PC-9 (cell line): ENCODE measurements at regions of chr3 and their contacts with region 1.

Region 1: DNA sequence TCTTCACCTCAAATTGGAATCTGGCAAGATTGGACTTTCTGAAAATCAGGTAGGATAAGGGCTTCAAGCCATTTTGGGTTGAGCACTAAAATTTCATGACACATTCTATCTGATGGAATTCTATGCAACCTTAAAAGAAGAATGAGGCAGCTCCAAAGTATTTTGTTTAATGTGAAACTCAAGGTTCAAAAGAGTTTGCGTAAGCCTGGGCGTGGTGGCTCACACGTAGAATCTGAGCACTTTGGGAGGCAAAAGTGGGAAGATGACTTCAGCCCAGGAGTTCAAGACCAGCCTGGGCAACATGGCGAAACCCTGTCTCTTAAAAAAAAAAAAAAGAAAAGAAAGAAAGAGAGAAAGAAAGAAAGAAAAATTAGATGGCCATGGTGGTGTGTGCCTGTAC is 3.6 kb upstream of the PLA1A start:
- DNase-seq: no peak
- H3K4me3 ChIP-seq: no peak overlapping the region
- H3K27ac ChIP-seq: no peak overlapping the region
- H3K4me1 ChIP-seq: no peaks in the 10 kb centered on the region
- H3K27me3 ChIP-seq: peaks cover 32% of the 10 kb centered on the region
- CTCF ChIP-seq: no peak

Region 2: DNA sequence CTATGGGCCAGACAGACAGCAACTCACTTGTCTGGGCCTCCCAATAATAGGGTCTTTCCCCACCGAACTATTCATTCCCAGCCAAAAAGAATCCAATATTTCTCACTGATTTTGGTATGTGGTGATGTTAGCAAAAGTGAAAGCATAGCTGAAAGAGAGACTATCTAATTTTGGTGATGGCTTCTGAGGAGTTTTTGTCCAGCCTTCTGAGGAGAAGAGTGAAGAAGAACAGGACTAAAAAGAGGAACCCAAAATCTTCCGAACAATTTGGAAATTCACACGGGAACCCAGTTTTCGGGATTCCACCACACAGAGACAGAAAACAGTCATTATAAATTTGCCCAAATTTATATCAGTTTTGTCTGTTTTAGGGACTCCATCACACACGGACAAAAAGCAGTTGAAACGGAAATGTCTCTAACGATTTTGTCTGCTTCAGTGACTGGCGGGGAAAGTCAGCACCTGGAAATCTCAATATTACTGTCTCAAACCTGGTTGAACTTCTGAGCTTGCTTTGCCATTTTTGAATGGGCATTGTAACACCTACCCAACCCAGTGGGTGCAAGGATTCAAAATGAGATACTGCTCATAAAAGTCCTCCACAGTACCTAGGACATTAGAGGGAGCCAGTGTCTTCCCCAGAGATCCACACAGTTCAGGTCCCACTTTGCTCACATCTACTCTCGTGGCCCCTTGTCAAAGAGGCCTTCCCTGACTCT is 43.7 kb before region 1 on chr3:
- CTCF ChIA-PET with region 1: no interaction called
- POLR2A ChIA-PET with region 1: no interaction called
- intact Hi-C with region 1: no loop called
- DNase-seq: no peak
- H3K4me3 ChIP-seq: no peak overlapping the region
- H3K27ac ChIP-seq: no peak overlapping the region
- H3K4me1 ChIP-seq: no peaks in the 10 kb centered on the region
- H3K27me3 ChIP-seq: no peaks in the 10 kb centered on the region
- CTCF ChIP-seq: no peak

Region 3: GRCh38 chr3:119613872-119614271 is 19.8 kb after region 1 on chr3:
- CTCF ChIA-PET with region 1: no interaction called
- POLR2A ChIA-PET with region 1: interaction called, 12 read pairs
- intact Hi-C with region 1: no loop called
- DNase-seq: no peak
- H3K4me3 ChIP-seq: no peak overlapping the region
- H3K27ac ChIP-seq: no peak overlapping the region
- H3K4me1 ChIP-seq: peaks cover 2% of the 10 kb centered on the region
- H3K27me3 ChIP-seq: no peaks in the 10 kb centered on the region; the same call in 1 of the 2 replicates
- CTCF ChIP-seq: no peak

Region 4: DNA sequence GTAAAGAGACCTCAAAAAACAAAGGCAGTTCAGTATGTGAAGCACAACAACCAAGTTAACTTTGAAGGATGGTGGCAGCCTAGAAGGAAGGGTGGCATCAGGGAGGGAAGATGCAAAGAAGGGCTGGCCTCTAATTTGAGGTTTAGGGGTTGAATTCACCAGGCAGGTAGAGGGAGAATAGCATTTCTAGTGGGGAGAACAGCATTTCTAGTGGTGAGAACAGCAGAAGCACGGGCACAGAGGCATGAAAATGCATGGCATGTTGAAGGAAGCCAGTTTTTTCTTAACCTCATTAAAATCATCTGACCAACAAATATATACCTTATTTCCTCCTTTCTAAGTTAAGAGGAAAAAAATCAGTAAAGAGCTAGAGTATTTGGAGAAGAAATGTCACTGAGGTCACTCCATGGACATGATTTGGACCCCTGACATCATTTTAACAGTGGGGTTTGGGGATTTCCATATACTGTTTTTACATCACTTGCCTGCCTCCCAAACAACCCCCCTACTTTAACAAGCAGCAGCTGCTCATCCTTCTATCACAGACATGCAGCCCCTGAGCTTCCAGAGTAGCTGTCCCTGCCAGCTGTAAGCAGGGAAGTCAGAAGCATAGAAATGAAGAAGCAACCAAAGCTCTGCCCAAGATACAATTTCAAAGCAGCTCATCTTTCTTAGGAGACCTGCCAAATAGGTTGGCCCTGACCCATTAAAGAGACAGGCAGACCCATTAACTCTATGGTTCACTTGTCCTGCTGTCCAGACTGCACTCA is 68.7 kb after region 1 on chr3:
- CTCF ChIA-PET with region 1: no interaction called
- POLR2A ChIA-PET with region 1: no interaction called
- intact Hi-C with region 1: no loop called
- DNase-seq: no peak
- H3K4me3 ChIP-seq: no peak overlapping the region
- H3K27ac ChIP-seq: no peak overlapping the region
- H3K4me1 ChIP-seq: no peaks in the 10 kb centered on the region
- H3K27me3 ChIP-seq: no peaks in the 10 kb centered on the region
- CTCF ChIP-seq: no peak

Region 5: GRCh38 chr3:119774444-119774843 is 180.4 kb after region 1 on chr3:
- CTCF ChIA-PET with region 1: no interaction called
- POLR2A ChIA-PET with region 1: no interaction called
- intact Hi-C with region 1: no loop called
- DNase-seq: no peak
- H3K4me3 ChIP-seq: no peak overlapping the region
- H3K27ac ChIP-seq: no peak overlapping the region
- H3K4me1 ChIP-seq: no peaks in the 10 kb centered on the region
- H3K27me3 ChIP-seq: no peaks in the 10 kb centered on the region
- CTCF ChIP-seq: no peak